WTC11 (cell line): ENCODE measurements at regions of chr19 and their contacts with region 1.

Region 1: DNA sequence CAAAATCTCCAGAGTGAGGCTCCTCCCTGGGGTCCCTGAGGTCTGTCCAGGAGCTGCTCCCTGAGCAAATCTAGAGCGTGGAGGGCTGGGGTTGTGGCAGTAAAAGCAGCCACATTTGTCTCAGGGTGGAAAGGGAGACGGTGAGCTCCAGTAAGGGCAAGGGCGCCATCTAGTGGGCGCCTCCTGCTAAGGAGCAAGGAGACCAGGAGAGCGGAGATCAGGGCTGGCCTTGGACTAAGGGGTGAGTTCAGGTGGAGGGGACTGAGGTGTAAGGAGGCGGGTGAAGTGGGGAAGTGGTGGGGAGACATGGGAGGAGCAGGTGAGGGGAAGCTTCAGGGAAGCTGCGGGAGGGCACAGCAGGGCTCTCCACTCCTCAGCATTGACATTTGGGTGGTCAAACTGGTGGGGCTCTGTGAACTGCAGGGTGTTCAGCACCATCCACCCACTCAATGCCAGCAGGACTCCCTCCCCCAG is 5.3 kb upstream of the CEACAM21 start:
- DNase-seq: peak; percentile 87
- ATAC-seq: peak; percentile 97
- H3K4me3 Mint-ChIP-seq: no peak overlapping the region
- H3K27ac Mint-ChIP-seq: no peak overlapping the region
- H3K4me1 Mint-ChIP-seq: peaks cover 3% of the 10 kb centered on the region
- H3K27me3 Mint-ChIP-seq: peaks cover 87% of the 10 kb centered on the region
- CTCF ChIP-seq: peak; percentile 87

Region 2: GRCh38 chr19:41341669-41342490 is 228.8 kb before region 1 on chr19:
- CTCF ChIA-PET with region 1: interaction called, 14 read pairs
- POLR2A ChIA-PET with region 1: no interaction called
- DNase-seq: peak; percentile 56
- ATAC-seq: peak; percentile 89
- H3K4me3 Mint-ChIP-seq: no peak overlapping the region
- H3K27ac Mint-ChIP-seq: no peak overlapping the region
- H3K4me1 Mint-ChIP-seq: no peaks in the 10 kb centered on the region
- H3K27me3 Mint-ChIP-seq: no peaks in the 10 kb centered on the region
- CTCF ChIP-seq: no peak

Region 3: GRCh38 chr19:41439441-41440222 is 131.0 kb before region 1 on chr19 and contains the start of gene DMAC2:
- CTCF ChIA-PET with region 1: interaction called, 310 read pairs
- POLR2A ChIA-PET with region 1: no interaction called
- DNase-seq: peak; percentile 97
- ATAC-seq: peak; percentile 98
- H3K4me3 Mint-ChIP-seq: no peak within 1 kb of the TSS
- H3K27ac Mint-ChIP-seq: no peak within 1 kb of the TSS
- H3K4me1 Mint-ChIP-seq: peaks cover 13% of the 10 kb centered on the region
- H3K27me3 Mint-ChIP-seq: peaks cover 17% of the 10 kb centered on the region; the same call in 1 of the 2 replicates
- CTCF ChIP-seq: no peak
- total RNA-seq, gene DMAC2: 77.6 to 85.6 TPM (median 82.6 TPM) in 3 replicates

Region 4: DNA sequence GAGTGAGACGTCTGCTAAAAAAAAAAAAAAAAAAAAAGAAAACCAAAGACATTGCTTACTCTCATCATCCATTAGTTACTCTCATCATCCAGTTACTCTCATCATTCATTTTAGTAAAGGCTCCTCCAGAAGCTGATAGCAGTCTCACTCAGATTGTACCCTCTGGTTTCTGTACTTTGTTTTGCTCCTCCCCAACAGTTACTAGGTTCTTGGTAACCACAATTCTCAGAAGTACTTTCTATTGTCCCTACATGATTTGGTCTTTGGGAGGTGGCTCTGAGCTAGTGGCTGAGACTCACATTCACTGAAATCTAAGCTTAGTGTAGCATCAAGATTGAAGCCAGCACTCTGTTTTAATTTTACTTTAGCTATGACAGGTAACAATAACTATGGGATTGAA is 113.4 kb before region 1 on chr19:
- CTCF ChIA-PET with region 1: interaction called, 310 read pairs
- POLR2A ChIA-PET with region 1: no interaction called
- DNase-seq: no peak
- ATAC-seq: no peak
- H3K4me3 Mint-ChIP-seq: no peak overlapping the region
- H3K27ac Mint-ChIP-seq: no peak overlapping the region
- H3K4me1 Mint-ChIP-seq: no peaks in the 10 kb centered on the region
- H3K27me3 Mint-ChIP-seq: peaks cover 58% of the 10 kb centered on the region
- CTCF ChIP-seq: no peak

Region 5: DNA sequence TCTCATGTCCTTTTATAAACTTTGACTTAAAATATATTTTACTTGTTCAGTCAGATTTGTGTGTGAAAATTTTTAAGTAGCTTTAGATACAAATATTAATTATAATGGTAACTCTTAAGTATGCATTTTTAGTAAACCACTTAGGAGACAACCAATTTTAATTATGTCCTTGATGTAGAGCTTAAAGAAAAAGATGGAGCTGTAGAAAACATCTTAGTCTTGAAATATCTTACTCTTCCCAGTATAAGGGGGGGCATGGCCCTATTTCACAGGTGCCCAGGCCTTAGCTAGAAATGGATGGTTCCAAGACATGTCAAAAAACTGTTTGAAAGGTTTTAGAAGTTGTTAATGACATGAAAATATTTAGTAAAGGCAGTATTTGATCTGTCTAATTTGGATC is 38.1 kb before region 1 on chr19:
- CTCF ChIA-PET with region 1: no interaction called
- POLR2A ChIA-PET with region 1: no interaction called
- DNase-seq: no peak
- ATAC-seq: no peak
- H3K4me3 Mint-ChIP-seq: no peak overlapping the region
- H3K27ac Mint-ChIP-seq: no peak overlapping the region
- H3K4me1 Mint-ChIP-seq: peaks cover 19% of the 10 kb centered on the region
- H3K27me3 Mint-ChIP-seq: peaks cover 51% of the 10 kb centered on the region
- CTCF ChIP-seq: no peak

Region 6: DNA sequence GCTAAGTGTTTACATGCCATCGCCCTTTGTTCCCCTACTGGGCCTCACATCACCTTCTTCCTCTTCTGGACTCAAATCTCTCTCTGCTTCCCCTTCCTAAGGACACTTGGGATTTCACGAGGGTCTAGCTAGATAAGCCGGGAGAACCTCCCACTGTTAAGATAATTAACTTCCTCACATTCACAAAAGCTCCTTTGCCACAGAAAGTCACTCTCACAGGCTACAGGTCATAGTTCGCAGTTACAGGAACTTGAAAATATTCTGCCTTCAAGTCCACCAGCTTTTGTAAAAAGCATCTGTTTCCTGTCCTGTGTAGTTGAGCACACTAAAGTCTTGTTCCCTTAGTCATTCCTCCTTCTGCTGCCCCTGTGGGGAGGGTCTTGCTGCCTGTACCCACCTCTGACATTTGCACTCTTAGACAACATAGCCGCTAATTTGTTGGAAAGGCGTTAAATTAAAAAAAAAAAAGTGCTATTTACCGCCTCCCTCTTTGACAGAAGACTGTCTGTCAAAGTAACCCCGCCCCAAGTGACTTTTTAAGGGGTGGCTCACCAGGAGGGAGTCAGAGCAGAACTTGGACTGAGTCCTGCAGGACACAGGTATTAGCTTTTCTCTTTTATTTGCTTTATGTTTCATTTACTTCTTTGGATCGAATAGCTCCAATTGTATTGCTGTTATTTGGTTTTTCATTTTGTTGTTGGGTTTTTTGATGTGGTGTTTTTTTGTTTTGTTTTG is 21.6 kb before region 1 on chr19:
- CTCF ChIA-PET with region 1: interaction called, 12 read pairs
- POLR2A ChIA-PET with region 1: no interaction called
- DNase-seq: no peak
- ATAC-seq: peak; percentile 86
- H3K4me3 Mint-ChIP-seq: peak overlapping the region; percentile 60
- H3K27ac Mint-ChIP-seq: peak overlapping the region; percentile 95
- H3K4me1 Mint-ChIP-seq: peaks cover 44% of the 10 kb centered on the region
- H3K27me3 Mint-ChIP-seq: peaks cover 14% of the 10 kb centered on the region
- CTCF ChIP-seq: no peak

Region 7: GRCh38 chr19:41597600-41598041 is 26.9 kb after region 1 on chr19:
- CTCF ChIA-PET with region 1: interaction called, 20 read pairs
- POLR2A ChIA-PET with region 1: no interaction called
- DNase-seq: peak; percentile 80
- ATAC-seq: peak; percentile 84
- H3K4me3 Mint-ChIP-seq: no peak overlapping the region
- H3K27ac Mint-ChIP-seq: no peak overlapping the region
- H3K4me1 Mint-ChIP-seq: peaks cover 16% of the 10 kb centered on the region
- H3K27me3 Mint-ChIP-seq: peaks cover 78% of the 10 kb centered on the region
- CTCF ChIP-seq: peak; percentile 96

Region 8: DNA sequence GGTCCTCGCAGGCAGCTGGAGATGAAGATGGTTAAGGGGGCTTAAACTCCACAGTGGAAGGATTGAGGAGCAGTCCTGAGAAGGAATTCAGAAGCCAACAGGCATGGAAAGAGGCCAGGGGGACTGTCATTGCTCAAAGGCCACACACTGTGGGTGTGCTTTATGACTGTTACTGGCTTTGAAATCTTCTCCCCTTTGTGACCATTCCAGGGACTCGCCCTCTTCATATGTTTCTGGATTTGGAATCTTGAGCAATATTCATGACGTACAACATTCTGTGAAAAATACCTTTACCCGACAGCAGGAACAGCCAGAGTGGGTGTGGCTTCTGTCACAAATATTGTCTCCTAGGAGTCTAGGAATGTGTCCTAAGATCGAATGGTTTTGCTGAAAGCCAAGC is 100.8 kb after region 1 on chr19:
- CTCF ChIA-PET with region 1: no interaction called
- POLR2A ChIA-PET with region 1: no interaction called
- DNase-seq: no peak
- ATAC-seq: no peak
- H3K4me3 Mint-ChIP-seq: no peak overlapping the region
- H3K27ac Mint-ChIP-seq: no peak overlapping the region
- H3K4me1 Mint-ChIP-seq: no peaks in the 10 kb centered on the region
- H3K27me3 Mint-ChIP-seq: peaks cover 64% of the 10 kb centered on the region
- CTCF ChIP-seq: no peak